Activated CD4-positive, alpha-beta T cell treated with anti-CD3 and anti-CD28 coated beads, Interleukin-2, amount 10 ng/mL, durations not matched to agents 24 days and 14 days (primary cell): ENCODE measurements at regions of chr18 and their contacts with region 1.

Region 1: DNA sequence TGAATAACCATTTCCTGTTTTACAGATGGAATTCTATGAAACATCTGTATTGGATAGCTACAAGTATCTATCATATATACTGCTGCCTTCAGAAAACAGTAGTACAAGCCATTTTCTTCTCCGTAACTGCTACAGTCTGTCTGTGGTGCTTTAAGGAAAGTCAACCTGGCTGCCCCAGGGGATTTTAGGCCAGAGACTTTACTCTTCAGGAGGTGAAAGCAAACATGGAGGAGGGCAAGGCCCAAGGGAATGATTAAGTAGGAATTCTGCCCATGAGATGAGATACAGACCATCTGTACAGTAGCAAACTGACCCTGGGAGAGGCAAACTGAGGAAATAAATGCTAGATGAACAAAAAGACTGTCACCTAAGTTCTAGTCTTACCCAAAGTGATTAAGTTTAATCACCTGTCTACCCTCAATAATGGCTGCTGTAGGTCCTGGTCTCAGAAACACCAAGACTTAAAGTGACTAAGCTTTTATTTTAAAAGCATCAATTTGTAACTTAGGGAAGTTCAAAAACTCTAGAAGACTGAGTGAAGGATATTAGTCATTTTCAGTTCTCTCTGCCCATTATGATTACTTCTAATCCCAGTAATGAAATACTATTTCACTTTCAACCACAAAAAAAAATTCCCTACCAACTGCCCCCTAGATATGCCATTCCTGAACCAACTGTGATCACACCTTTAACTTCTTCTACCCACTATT is 14.8 kb downstream of the MBD2 start:
- DNase-seq: no peak
- H3K4me3 Mint-ChIP-seq: peak overlapping the region; percentile 49
- H3K27ac Mint-ChIP-seq: peak overlapping the region; percentile 79
- H3K4me1 Mint-ChIP-seq: peaks cover 50% of the 10 kb centered on the region
- H3K27me3 Mint-ChIP-seq: no peaks in the 10 kb centered on the region

Region 2: GRCh38 chr18:54173980-54174630 is 35.5 kb before region 1 on chr18:
- intact Hi-C with region 1: loop called (anchors 1 kb)
- DNase-seq: peak; percentile 63
- H3K4me3 Mint-ChIP-seq: peak overlapping the region; percentile 39
- H3K27ac Mint-ChIP-seq: peak overlapping the region; percentile 90
- H3K4me1 Mint-ChIP-seq: peaks cover 61% of the 10 kb centered on the region
- H3K27me3 Mint-ChIP-seq: no peaks in the 10 kb centered on the region

Region 3: GRCh38 chr18:54181856-54182602 is 27.6 kb before region 1 on chr18:
- intact Hi-C with region 1: loop called (anchors 1 kb)
- DNase-seq: no peak
- H3K4me3 Mint-ChIP-seq: no peak overlapping the region
- H3K27ac Mint-ChIP-seq: no peak overlapping the region
- H3K4me1 Mint-ChIP-seq: peaks cover 10% of the 10 kb centered on the region
- H3K27me3 Mint-ChIP-seq: no peaks in the 10 kb centered on the region

Region 4: GRCh38 chr18:54278615-54279014 is 69.0 kb after region 1 on chr18:
- intact Hi-C with region 1: no loop called
- DNase-seq: no peak
- H3K4me3 Mint-ChIP-seq: no peak overlapping the region
- H3K27ac Mint-ChIP-seq: peak overlapping the region; percentile 34
- H3K4me1 Mint-ChIP-seq: peaks cover 5% of the 10 kb centered on the region
- H3K27me3 Mint-ChIP-seq: no peaks in the 10 kb centered on the region

Region 5: GRCh38 chr18:54357100-54357659 is 147.6 kb after region 1 on chr18:
- intact Hi-C with region 1: no loop called
- DNase-seq: no peak
- H3K4me3 Mint-ChIP-seq: peak overlapping the region; percentile 99
- H3K27ac Mint-ChIP-seq: peak overlapping the region; percentile 100
- H3K4me1 Mint-ChIP-seq: peaks cover 25% of the 10 kb centered on the region
- H3K27me3 Mint-ChIP-seq: peaks cover 2% of the 10 kb centered on the region